ENCODE measurements at regions of chr12 and their contacts with region 1.

Region 1: DNA sequence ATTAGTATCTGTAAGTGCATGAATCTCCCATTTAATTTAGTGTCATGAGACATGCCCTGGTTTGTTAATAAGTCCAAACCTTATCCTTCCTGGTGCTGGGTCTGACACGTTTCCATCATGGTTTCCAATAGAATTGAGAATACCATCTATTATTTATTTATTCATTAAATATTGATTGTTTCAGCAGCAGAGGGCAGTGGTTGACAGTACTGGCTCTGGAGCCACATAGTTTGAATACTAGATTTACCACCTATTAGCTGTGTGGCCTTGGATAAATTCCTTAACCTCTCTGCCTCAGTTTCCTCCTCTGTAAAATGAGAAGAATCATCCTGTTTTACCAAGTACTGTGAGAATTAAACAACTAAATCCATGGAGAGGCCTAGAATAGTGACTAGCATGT is 941 bp upstream of the STAB2 start:
- H3K4me3 ChIP-seq: no peak overlapping the region
- H3K27ac ChIP-seq: no peak overlapping the region
- H3K4me1 ChIP-seq: no peaks in the 10 kb centered on the region
- CTCF ChIP-seq: no peak

Region 2: GRCh38 chr12:103571286-103571685 is 14.8 kb before region 1 on chr12:
- CTCF ChIA-PET with region 1: interaction called, 11 read pairs
- POLR2A ChIA-PET with region 1: no interaction called
- H3K4me3 ChIP-seq: no peak overlapping the region
- H3K27ac ChIP-seq: no peak overlapping the region
- H3K4me1 ChIP-seq: no peaks in the 10 kb centered on the region
- CTCF ChIP-seq: no peak

Measured in HEK293 (cell line).